Psoas muscle (tissue), 8 donors: ENCODE measurements at regions of chr20 and their contacts with region 1.

Region 1: GRCh38 chr20:60057123-60057801 is 99.0 kb downstream of the CDH26 start:
- DNase-seq: peak; percentile 65 to 80
- ATAC-seq: peak; percentile 32 to 73 (median 54)
- H3K4me3 ChIP-seq: peak overlapping the region; percentile 42
- H3K27ac ChIP-seq: peak overlapping the region; percentile 86
- H3K4me1 ChIP-seq: peaks cover 44% of the 10 kb centered on the region
- H3K27me3 ChIP-seq: no peaks in the 10 kb centered on the region
- CTCF ChIP-seq: peak; percentile 89

Region 2: GRCh38 chr20:60137629-60138245 is 80.5 kb after region 1 on chr20:
- intact Hi-C with region 1: loop called in 1 of 2 experiments (anchors 5 kb)
- DNase-seq: peak in 1 of 2 donors; percentile 29
- ATAC-seq: peak; percentile 52 to 83 (median 78)
- H3K4me3 ChIP-seq: peak overlapping the region; percentile 64
- H3K27ac ChIP-seq: peak overlapping the region; percentile 71
- H3K4me1 ChIP-seq: no peaks in the 10 kb centered on the region
- H3K27me3 ChIP-seq: no peaks in the 10 kb centered on the region
- CTCF ChIP-seq: peak; percentile 62

Region 3: DNA sequence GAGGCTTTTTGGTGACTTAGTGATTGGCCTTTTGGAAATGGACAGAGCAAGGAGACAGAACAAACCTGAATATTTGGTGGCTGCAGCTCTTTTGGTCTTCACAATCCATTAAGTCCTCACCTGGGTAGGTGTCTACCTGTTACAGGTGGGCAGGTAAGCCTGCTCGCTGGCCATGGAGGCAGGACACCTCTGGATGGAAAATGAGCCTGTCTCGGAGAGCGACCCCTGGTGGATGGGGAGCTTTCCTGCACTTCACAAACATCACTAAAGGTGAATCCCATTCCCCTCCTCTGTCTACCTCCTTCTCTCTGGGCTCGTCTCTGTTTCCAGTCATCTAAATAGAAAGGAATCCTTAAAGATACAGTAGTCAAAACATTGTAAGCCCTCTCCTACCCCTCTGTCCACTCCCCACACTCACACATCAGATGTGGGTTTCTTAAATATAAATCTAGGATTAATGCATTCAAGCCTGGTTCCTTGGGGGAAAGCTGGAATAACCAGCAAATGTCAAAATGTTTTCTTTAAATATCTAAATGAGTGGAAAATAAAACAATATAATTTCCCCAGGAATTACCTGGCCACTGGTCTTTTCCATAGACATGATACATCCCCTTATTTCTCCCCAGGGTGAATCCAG is 205.8 kb after region 1 on chr20:
- intact Hi-C with region 1: loop called (anchors 2 to 5 kb)
- DNase-seq: peak in 1 of 2 donors; percentile 26
- ATAC-seq: peak in 2 of 4 donors; percentile 52 to 66
- H3K4me3 ChIP-seq: no peak overlapping the region
- H3K27ac ChIP-seq: no peak overlapping the region
- H3K4me1 ChIP-seq: no peaks in the 10 kb centered on the region
- H3K27me3 ChIP-seq: peaks cover 0 to 3% (median 0%) of the 10 kb centered on the region in 3 donors
- CTCF ChIP-seq: peak; percentile 49

Region 4: DNA sequence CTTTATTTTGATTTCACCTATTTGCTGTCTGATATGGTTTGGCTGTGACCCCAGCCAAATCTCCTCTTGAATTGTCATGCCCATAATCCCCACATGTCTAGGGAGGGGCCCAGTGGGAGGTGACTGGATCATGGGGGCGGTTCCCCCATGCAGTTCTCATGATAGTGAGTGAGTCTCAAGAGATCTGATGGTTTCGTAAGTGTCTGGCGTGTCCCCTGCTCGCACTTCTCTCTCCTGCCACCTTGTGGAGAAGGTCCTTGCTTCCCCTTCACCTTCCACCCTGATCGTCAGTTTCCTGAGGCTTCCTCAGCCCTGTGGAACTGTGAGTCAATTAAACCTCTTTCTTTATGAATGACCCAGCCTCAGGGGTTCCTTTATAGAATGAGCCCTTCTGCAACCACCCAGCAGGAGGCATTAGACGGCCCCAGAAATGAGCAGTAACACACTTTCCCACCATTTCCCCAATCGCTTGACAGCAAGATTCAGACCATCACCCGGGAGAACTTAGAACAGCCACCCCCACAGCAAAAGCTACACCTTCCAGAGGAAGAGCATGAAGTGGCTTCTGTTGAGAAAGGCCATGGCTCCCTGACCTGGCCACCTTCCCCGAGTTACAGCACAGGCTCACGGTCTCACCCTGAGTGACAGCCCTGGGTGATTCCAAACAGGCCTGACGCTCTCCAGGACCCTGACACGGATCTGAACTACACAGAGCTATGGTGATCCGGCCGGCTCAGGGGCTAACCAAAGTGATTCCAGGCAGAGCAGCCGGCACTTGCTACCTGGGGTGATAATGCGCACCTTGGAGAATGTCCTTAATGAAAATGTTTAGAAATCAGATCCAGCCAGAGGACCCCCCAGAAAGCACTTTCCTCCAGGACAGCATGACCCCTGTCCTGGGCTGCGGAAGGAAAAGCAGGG is 1063.6 kb after region 1 on chr20:
- intact Hi-C with region 1: loop called in 1 of 2 experiments (anchors 5 kb)
- DNase-seq: no peak
- ATAC-seq: peak; percentile 38 to 69 (median 44)
- H3K4me3 ChIP-seq: no peak overlapping the region
- H3K27ac ChIP-seq: no peak overlapping the region
- H3K4me1 ChIP-seq: no peaks in the 10 kb centered on the region
- H3K27me3 ChIP-seq: no peaks in the 10 kb centered on the region
- CTCF ChIP-seq: peak; percentile 44